Heart left ventricle (tissue), 16 donors: ENCODE measurements at regions of chr1 and their contacts with region 1.

Region 1: DNA sequence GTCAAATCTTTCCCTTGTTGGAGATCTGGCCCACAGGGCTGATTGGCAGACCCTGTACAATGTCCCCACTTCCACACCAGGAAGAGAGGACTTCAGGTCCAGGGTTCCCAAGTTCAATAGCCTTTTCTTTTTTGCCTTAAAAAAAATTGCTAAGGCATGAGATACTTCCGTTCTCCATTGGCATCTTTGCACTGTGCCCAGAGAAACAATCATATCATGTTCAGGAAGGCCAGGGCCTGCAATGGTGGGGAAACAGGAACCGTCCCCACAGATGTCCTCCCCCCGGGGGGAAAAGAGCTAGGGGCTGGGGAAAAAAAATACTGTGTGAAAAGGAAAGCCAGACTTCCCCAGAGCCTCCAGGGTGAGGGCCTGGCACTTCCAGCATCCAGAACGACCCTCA is 24.6 kb upstream of the GJA8 start:
- DNase-seq: no peak
- ATAC-seq: peak in 1 of 4 donors; percentile 47
- H3K4me3 ChIP-seq: no peak overlapping the region
- H3K27ac ChIP-seq: no peak overlapping the region
- H3K4me1 ChIP-seq: peaks cover 0 to 6% (median 0%) of the 10 kb centered on the region in 12 donors
- H3K27me3 ChIP-seq: no peaks in the 10 kb centered on the region
- CTCF ChIP-seq: no peak
- POLR2A ChIP-seq: no peak

Region 2: GRCh38 chr1:147741065-147741464 is 137.0 kb before region 1 on chr1:
- intact Hi-C with region 1: loop called in 1 of 10 experiments (anchors 5 kb)
- DNase-seq: peak in 4 of 5 donors; percentile 37 to 69 (median 52)
- ATAC-seq: peak in 2 of 4 donors; percentile 30 to 39
- H3K4me3 ChIP-seq: no peak overlapping the region
- H3K27ac ChIP-seq: peak overlapping the region in 3 of 12 donors; percentile 24 to 73 (median 31)
- H3K4me1 ChIP-seq: peaks cover 0 to 47% (median 8%) of the 10 kb centered on the region in 12 donors
- H3K27me3 ChIP-seq: no peaks in the 10 kb centered on the region
- CTCF ChIP-seq: no peak
- POLR2A ChIP-seq: no peak

Region 3: DNA sequence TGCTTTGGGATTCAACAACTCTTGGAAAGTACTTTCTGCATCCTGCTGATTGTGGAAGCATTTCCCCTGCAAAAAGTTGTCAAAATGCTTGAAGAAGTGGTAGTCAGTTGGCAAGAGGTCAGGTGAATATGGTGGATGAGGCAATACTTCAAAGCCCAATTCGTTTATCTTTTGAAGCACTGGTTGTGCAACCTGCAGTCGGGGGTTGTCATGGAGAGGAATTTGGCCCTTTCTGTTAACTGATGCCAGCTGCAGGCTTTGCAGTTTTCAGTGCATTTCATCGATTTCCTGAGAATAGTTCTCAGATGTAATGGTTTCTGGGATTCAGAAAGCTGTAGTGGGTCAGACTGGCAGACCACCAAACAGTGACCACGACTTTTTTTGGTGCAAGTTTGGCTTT is 70.0 kb before region 1 on chr1:
- intact Hi-C with region 1: no loop called
- DNase-seq: no peak
- ATAC-seq: no peak
- H3K4me3 ChIP-seq: no peak overlapping the region
- H3K27ac ChIP-seq: no peak overlapping the region
- H3K4me1 ChIP-seq: peaks cover 0 to 13% (median 0%) of the 10 kb centered on the region in 12 donors
- H3K27me3 ChIP-seq: no peaks in the 10 kb centered on the region
- CTCF ChIP-seq: no peak
- POLR2A ChIP-seq: no peak

Region 4: GRCh38 chr1:147837129-147837963 is 40.7 kb before region 1 on chr1:
- intact Hi-C with region 1: loop called in 2 of 10 experiments (anchors 5 kb)
- DNase-seq: no peak
- ATAC-seq: no peak
- H3K4me3 ChIP-seq: no peak overlapping the region
- H3K27ac ChIP-seq: no peak overlapping the region
- H3K4me1 ChIP-seq: no peaks in the 10 kb centered on the region
- H3K27me3 ChIP-seq: no peaks in the 10 kb centered on the region
- CTCF ChIP-seq: no peak
- POLR2A ChIP-seq: no peak

Region 5: DNA sequence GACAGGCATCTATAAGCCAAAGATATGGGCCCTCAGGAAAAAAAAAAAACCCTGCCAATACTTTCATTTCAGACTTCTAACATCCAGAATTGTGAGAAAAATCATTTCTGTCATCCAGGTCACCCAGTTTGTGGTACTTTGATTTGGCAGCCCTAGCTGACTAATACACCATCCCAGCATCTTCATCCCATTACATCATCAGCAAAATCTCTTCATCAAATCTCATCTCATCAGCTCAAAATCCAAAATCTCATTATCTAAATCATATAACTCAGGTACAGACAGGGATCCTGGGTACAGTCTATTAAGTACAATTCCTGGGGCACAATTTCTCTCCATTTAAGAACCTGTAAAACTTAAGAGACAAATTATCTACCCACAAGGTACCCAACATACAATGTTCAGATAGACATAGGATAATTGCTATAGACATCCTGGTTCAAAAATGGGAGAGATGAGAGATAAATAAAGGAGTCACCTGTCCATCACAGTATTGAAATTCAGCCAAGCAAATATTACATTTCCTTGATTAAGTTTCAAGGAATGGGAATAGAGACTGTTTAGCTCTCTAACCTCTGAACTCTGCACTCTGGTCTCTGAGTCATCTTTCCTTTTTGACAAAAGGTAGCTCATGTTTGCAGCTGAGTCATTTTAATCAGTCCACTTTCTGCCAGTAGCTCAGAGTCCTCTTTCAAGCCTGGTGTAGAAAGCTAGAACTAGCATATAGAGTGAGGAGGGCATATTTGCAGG is 27.1 kb before region 1 on chr1:
- intact Hi-C with region 1: no loop called
- DNase-seq: no peak
- ATAC-seq: no peak
- H3K4me3 ChIP-seq: no peak overlapping the region
- H3K27ac ChIP-seq: no peak overlapping the region
- H3K4me1 ChIP-seq: no peaks in the 10 kb centered on the region
- H3K27me3 ChIP-seq: no peaks in the 10 kb centered on the region
- CTCF ChIP-seq: no peak
- POLR2A ChIP-seq: no peak

Region 6: GRCh38 chr1:147902183-147902845 is 24.3 kb after region 1 on chr1 and contains the start of gene GJA8:
- intact Hi-C with region 1: no loop called
- DNase-seq: no peak
- ATAC-seq: no peak
- H3K4me3 ChIP-seq: no peak within 1 kb of the TSS
- H3K27ac ChIP-seq: no peak within 1 kb of the TSS
- H3K4me1 ChIP-seq: peaks cover 0 to 3% (median 0%) of the 10 kb centered on the region in 12 donors
- H3K27me3 ChIP-seq: no peaks in the 10 kb centered on the region
- CTCF ChIP-seq: no peak
- POLR2A ChIP-seq: no peak
- total RNA-seq, gene GJA8: not detected